PC-3 (cell line): ENCODE measurements at regions of chr11 and their contacts with region 1.

Region 1: GRCh38 chr11:66579017-66579606 is 10.7 kb upstream of the CTSF start:
- DNase-seq: peak; percentile 74
- ATAC-seq: peak; percentile 82
- H3K4me3 ChIP-seq: no peak overlapping the region
- H3K27ac ChIP-seq: no peak overlapping the region
- H3K4me1 ChIP-seq: no peaks in the 10 kb centered on the region
- H3K27me3 ChIP-seq: no peaks in the 10 kb centered on the region
- CTCF ChIP-seq: peak; percentile 90

Region 2: DNA sequence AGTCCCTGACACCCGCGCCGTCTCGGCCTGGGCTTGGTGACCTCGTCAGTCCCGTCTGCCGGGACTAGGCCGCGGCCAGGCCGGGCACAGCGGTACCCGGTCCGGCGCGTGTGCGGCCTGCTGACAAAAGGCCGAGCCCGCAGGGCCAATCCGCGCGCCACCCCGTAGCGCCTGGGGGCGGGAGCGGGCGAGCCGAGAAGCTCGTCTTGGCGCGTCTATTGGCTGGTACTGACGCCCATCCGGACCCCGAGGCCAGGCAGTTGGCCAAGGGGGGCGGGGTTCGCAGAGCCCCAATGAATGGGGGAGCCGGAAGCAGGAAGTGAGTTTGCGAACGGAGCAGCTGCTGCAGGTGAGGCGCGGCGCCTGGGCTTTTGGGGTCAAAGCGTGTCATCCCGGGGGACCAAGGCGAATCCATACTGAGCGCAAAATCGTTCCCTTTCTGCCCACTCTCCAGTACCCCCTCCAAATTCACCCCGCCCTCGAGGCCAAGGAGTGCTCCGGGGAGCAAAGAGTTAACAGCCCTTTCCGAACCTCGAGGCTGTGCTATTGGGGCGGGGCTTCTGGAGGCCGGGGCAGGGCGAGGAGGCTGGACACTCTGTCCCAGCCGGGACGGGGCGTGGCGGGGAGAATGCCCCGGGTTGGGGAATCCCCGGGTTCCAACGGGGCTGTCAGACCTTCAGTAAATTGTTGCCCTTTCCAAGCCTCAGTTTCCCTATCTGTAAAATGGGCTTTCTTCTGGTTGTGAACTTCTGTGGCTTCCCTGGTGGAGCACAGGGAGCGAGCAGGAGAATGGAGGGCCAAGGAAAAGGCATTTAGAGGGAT is 98.8 kb before region 1 on chr11 and contains the start of gene DPP3:
- CTCF ChIA-PET with region 1: no interaction called
- POLR2A ChIA-PET with region 1: no interaction called
- intact Hi-C with region 1: no loop called
- DNase-seq: peak; percentile 99
- ATAC-seq: peak; percentile 89
- H3K4me3 ChIP-seq: peak within 1 kb of the TSS; percentile 78
- H3K27ac ChIP-seq: peak within 1 kb of the TSS; percentile 53
- H3K4me1 ChIP-seq: peaks cover 14% of the 10 kb centered on the region
- H3K27me3 ChIP-seq: no peaks in the 10 kb centered on the region
- CTCF ChIP-seq: no peak
- total RNA-seq, gene DPP3: 135 and 165 TPM in 2 replicates

Region 3: GRCh38 chr11:66651016-66651415 is 71.9 kb after region 1 on chr11:
- CTCF ChIA-PET with region 1: no interaction called
- POLR2A ChIA-PET with region 1: no interaction called
- intact Hi-C with region 1: no loop called
- DNase-seq: no peak
- ATAC-seq: 0 out of 2 replicates have a peak, but pooled peaks have one; percentile 8
- H3K4me3 ChIP-seq: no peak overlapping the region
- H3K27ac ChIP-seq: no peak overlapping the region
- H3K4me1 ChIP-seq: no peaks in the 10 kb centered on the region
- H3K27me3 ChIP-seq: no peaks in the 10 kb centered on the region
- CTCF ChIP-seq: no peak

Region 4: DNA sequence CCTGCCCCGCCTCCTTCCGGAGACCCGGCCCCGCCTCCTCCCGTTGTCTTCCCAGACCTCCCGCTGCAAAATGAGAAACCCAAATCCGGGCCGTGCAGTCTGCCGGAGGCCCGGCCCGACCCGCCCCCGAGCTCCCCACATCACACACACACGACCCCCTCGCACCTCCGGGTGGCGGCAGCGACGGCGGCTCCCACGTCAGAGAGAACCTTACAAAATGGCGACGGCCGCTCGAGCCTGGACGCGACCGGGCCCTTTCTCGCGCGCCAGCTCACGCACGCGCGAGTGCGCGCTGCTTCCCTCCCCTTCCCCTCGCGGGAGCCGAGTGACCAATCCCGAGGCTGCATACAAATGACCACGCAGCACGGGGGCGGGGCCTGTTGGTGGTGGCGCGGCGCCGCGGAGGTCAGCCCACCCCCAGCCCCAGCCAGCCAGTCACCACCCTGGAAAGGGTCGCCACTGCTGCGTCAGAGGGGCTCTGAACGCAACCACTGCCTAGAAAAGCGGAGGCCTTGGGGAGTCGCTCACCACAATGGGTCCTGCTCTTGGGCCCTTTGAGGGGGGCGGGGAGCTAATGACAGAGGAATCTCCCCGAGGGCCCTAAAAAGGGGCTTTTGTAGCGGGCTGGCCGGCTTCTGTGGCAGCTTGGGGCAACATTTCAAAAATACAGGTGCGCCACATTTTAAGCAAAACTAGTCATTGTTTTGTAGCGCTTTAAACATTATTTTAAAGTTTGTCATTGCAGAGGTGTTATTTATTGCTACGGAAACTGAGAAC is 98.7 kb after region 1 on chr11 and contains the start of gene RBM4B:
- CTCF ChIA-PET with region 1: interaction called, 17 read pairs
- POLR2A ChIA-PET with region 1: no interaction called
- intact Hi-C with region 1: loop called (anchors 2 kb)
- DNase-seq: peak; percentile 97
- ATAC-seq: peak; percentile 92
- H3K4me3 ChIP-seq: peak within 1 kb of the TSS; percentile 68
- H3K27ac ChIP-seq: peak within 1 kb of the TSS; percentile 86
- H3K4me1 ChIP-seq: peaks cover 35% of the 10 kb centered on the region
- H3K27me3 ChIP-seq: no peaks in the 10 kb centered on the region
- CTCF ChIP-seq: no peak
- total RNA-seq, gene RBM4B: 31.4 and 40.2 TPM in 2 replicates

Region 5: GRCh38 chr11:66727282-66727882 is 148.3 kb after region 1 on chr11:
- CTCF ChIA-PET with region 1: interaction called, 11 read pairs
- POLR2A ChIA-PET with region 1: no interaction called
- intact Hi-C with region 1: no loop called
- DNase-seq: peak; percentile 50
- ATAC-seq: peak; percentile 33
- H3K4me3 ChIP-seq: peak overlapping the region; percentile 77
- H3K27ac ChIP-seq: peak overlapping the region; percentile 27
- H3K4me1 ChIP-seq: peaks cover 44% of the 10 kb centered on the region
- H3K27me3 ChIP-seq: no peaks in the 10 kb centered on the region
- CTCF ChIP-seq: no peak